ENCODE measurements at regions of chr16 and their contacts with region 1.

Region 1: DNA sequence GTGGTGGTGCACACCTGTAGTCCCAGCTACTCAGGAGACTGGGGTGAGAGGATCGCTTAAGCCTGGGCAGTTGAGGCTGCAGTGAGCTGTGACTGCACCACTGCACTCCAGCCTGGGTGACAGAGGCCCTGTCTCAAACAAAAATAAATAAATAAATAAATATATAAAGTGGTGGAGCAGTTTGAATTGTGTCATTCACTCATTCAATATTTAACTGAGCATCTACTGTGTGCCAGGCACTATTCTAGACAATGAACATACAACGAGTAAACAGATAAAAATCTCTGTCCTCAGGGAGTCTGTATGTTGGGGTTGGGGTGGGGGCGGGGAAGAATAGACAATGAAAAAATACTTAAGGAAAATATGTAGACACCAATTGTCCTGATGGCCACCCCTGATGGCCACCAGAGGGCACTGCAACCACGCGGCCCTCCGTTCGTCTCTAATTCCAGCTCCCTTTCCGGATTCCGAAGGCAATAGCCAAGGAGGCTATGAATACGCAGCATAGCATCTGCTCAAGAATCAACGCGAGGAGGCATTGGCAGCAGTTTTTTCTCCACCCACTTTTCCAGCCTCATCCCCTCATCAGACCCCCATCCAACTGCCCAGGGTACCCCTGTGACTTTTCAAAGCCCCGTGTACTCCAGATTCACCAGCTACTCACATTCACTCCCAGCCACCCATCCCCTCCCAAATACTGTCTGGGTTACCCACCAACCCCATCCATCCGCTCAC is 21.4 kb downstream of the QPRT start:
- DNase-seq: peak; percentile 86
- H3K4me3 ChIP-seq: no peak overlapping the region
- H3K27ac ChIP-seq: no peak overlapping the region
- H3K4me1 ChIP-seq: peaks cover 0 to 6% (median 1%) of the 10 kb centered on the region in 4 donors
- H3K27me3 ChIP-seq: no peaks in the 10 kb centered on the region
- CTCF ChIP-seq: peak; percentile 83 to 97 (median 87)
- EP300 ChIP-seq: no peak
- POLR2A ChIP-seq: no peak

Region 2: DNA sequence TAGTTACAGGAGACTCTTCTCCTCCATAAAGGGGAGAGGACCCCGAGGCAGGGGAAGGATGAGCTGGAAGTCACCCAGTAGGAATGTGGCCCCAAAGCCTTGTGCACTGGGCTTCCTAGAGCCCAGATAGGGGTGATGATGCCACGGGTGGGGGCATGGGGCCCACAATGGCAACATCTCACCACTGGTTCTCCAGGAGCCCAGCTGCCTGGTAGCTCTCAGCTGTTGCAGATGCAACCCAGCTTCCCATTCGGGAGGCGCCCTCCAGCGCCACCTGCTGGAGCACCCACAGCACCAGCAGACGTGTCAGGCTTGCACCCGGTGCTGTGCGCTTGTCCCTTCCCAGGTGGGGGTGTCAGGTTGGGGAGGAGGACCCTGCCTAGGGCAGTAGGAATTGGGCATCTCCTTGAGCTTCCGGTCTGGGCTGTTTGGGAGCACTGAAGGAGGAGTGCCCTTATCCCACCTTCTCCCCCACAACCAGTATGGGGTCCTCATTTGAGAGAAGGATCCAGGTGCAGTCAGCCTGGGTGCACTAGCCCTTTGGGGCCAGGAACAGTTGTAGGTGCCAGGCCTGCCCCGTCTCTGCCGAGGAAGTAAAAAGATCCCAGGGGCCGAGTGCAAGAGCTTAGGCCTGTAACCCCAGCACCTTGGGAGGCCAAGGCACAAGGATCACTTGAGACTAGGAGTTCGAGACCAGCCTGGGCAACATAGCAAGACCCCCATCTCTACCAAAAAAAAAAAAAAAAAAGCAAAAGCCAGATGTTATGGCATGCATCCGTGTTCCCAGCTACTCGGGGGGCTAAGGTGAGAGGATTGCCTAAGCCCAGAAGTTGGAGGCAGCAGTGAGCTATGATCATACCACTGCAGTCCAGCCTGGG is 148.2 kb after region 1 on chr16:
- in situ Hi-C with region 1: loop called in 1 of 4 experiments (anchors 10 kb)
- intact Hi-C with region 1: loop called (anchors 10 kb)
- DNase-seq: peak; percentile 88
- H3K4me3 ChIP-seq: no peak overlapping the region
- H3K27ac ChIP-seq: no peak overlapping the region
- H3K4me1 ChIP-seq: no peaks in the 10 kb centered on the region
- H3K27me3 ChIP-seq: no peaks in the 10 kb centered on the region
- CTCF ChIP-seq: peak; percentile 87 to 93 (median 88)
- EP300 ChIP-seq: no peak
- POLR2A ChIP-seq: no peak